ENCODE measurements at regions of chr3 and their contacts with region 1.

Region 1: GRCh38 chr3:72847751-72848702 is at the start of gene SHQ1:
- DNase-seq: peak; percentile 95
- ATAC-seq: peak; percentile 94
- H3K4me3 ChIP-seq: peak within 1 kb of the TSS; percentile 67 to 92 (median 85)
- H3K4me3 Mint-ChIP-seq: peak within 1 kb of the TSS; percentile 93
- H3K27ac ChIP-seq: peak within 1 kb of the TSS in 1 of 2 donors; percentile 50
- H3K27ac Mint-ChIP-seq: peak within 1 kb of the TSS; percentile 82
- H3K4me1 ChIP-seq: peaks cover 18 to 20% of the 10 kb centered on the region in 2 donors
- H3K4me1 Mint-ChIP-seq: peaks cover 35% of the 10 kb centered on the region
- H3K27me3 ChIP-seq: no peaks in the 10 kb centered on the region
- H3K27me3 Mint-ChIP-seq: no peaks in the 10 kb centered on the region
- CTCF ChIP-seq: no peak
- total RNA-seq, gene SHQ1: 30.6 and 32.0 TPM in 2 replicates

Region 2: DNA sequence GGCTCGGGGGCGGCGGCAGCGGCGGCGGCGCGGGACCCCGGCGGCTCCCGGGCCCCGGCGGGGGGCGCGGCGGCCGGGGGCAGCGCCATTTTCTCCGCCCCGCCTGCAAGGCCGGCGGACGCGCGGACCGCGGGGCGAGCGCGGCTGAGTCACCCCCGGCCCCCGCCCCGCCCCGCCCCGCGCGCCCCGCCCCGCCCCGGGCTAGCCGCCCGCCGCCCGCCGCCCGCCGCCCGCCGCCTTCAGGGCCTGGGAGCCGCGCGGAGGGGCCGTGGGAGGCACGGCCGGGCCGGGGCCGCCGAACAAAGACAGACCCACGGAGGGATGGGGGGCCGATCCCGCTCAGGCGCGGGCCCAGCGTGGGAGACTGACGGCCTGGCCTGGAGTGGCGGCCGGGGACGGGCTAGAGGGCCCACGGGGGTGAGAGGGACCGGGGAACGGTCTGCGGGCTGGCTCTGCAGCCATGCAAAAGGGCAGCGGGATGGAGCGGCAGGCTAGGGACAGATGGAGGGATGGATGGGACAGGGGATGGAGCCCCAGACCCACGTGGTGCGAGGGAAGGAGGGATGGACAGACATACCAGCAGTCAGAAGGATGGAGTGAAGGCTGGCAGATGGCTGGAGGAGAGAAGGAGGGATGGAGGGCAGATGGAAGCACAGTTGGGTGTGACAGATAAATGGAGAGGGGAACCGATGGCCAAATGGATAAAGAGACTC is 1122.6 kb before region 1 on chr3 and contains the start of gene EIF4E3:
- CTCF ChIA-PET with region 1: interaction called, 3 read pairs
- POLR2A ChIA-PET with region 1: no interaction called
- intact Hi-C with region 1: loop called (anchors 2 kb)
- DNase-seq: peak; percentile 51
- ATAC-seq: peak; percentile 73
- H3K4me3 ChIP-seq: peak within 1 kb of the TSS; percentile 59 to 71 (median 68)
- H3K4me3 Mint-ChIP-seq: peak within 1 kb of the TSS; percentile 82
- H3K27ac ChIP-seq: no peak within 1 kb of the TSS
- H3K27ac Mint-ChIP-seq: peak within 1 kb of the TSS; percentile 43
- H3K4me1 ChIP-seq: peaks cover 29% of the 10 kb centered on the region in 2 donors
- H3K4me1 Mint-ChIP-seq: peaks cover 43% of the 10 kb centered on the region
- H3K27me3 ChIP-seq: peaks cover 0 to 27% (median 0%) of the 10 kb centered on the region in 4 experiments
- H3K27me3 Mint-ChIP-seq: peaks cover 8% of the 10 kb centered on the region
- CTCF ChIP-seq: no peak
- total RNA-seq, gene EIF4E3: 4.2 and 5.0 TPM in 2 replicates

Region 3: DNA sequence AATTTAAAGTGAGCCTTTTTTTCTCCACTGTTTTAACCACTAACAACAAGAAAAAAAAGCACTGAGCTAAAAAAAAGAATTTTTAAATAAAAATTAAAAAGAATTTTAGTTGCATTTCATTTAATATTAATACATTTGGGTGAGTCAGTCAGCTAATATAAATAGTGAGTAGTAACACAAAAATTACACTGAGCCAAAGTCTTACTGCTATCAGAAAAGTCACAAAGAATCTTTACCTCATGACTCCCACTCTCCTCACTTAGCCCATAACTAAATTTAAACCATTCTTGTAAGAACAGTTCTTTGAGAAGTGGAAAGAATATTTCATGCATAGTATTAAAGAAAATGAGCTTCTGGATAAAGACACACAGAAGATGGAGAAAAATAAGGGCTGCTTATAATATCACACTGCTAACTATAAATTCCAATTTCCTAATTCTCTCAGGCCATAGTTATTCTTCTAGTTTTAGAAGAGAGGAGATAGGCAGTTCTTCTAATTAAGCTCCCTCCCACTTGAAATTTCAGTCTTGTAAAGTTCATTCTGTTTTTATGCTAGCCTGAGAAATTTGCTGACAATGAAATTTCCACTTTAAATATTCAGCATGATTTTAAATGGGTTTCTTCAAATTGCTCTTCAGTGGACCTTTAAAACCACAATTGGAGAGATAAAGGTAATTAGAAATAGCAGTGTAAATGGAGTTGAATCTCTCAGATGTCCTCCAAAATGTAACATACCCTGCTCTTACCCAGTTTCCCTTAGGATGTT is 17.4 kb before region 1 on chr3:
- CTCF ChIA-PET with region 1: no interaction called
- POLR2A ChIA-PET with region 1: no interaction called
- intact Hi-C with region 1: no loop called
- DNase-seq: no peak
- ATAC-seq: no peak
- H3K4me3 ChIP-seq: no peak overlapping the region
- H3K4me3 Mint-ChIP-seq: no peak overlapping the region
- H3K27ac ChIP-seq: no peak overlapping the region
- H3K27ac Mint-ChIP-seq: no peak overlapping the region
- H3K4me1 ChIP-seq: no peaks in the 10 kb centered on the region
- H3K4me1 Mint-ChIP-seq: no peaks in the 10 kb centered on the region
- H3K27me3 ChIP-seq: no peaks in the 10 kb centered on the region
- H3K27me3 Mint-ChIP-seq: no peaks in the 10 kb centered on the region
- CTCF ChIP-seq: no peak

Region 4: DNA sequence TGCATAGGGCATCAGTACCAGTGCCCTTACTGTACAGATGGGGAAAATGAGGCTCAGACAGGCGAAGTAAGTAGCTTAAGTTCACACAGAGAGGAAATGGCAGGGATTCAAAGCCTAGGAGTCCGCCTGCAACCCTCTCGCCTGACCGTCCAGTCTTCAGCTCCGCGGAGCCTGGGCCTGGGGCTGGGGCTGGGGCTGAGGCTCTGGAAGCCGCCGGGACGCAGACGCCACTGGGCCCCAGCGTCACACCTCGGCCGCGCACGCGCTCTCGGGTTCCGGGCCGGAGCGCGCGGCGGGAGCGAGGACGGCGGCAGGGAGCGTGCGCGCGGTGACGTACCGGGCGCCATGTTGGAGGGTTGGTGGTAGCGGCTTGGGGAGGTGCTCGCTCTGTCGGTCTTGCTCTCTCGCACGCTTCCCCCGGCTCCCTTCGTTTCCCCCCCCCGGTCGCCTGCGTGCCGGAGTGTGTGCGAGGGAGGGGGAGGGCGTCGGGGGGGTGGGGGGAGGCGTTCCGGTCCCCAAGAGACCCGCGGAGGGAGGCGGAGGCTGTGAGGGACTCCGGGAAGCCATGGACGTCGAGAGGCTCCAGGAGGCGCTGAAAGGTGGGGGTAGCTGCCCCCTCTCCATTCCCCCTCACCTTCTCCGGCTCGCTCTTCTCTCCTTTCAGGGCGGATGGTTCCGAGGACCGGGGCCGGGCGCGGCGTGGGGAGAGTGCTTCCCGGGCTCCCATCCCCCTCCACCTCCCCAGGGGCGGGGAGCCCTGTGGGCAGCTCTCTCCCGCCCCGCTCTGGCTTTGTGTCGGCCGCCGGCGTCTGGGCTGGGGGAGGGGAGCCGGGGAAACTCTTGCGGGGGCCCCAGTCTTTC is 148.7 kb after region 1 on chr3 and contains the start of gene PPP4R2:
- CTCF ChIA-PET with region 1: no interaction called
- POLR2A ChIA-PET with region 1: no interaction called
- intact Hi-C with region 1: loop called (anchors 1 kb)
- DNase-seq: peak; percentile 94
- ATAC-seq: peak; percentile 86
- H3K4me3 ChIP-seq: peak within 1 kb of the TSS; percentile 84 to 96 (median 91)
- H3K4me3 Mint-ChIP-seq: peak within 1 kb of the TSS; percentile 90
- H3K27ac ChIP-seq: peak within 1 kb of the TSS; percentile 92
- H3K27ac Mint-ChIP-seq: peak within 1 kb of the TSS; percentile 84
- H3K4me1 ChIP-seq: peaks cover 30 to 33% of the 10 kb centered on the region in 2 donors
- H3K4me1 Mint-ChIP-seq: peaks cover 36% of the 10 kb centered on the region
- H3K27me3 ChIP-seq: no peaks in the 10 kb centered on the region
- H3K27me3 Mint-ChIP-seq: no peaks in the 10 kb centered on the region
- CTCF ChIP-seq: no peak
- total RNA-seq, gene PPP4R2: 57.5 and 64.3 TPM in 2 replicates

Region 5: DNA sequence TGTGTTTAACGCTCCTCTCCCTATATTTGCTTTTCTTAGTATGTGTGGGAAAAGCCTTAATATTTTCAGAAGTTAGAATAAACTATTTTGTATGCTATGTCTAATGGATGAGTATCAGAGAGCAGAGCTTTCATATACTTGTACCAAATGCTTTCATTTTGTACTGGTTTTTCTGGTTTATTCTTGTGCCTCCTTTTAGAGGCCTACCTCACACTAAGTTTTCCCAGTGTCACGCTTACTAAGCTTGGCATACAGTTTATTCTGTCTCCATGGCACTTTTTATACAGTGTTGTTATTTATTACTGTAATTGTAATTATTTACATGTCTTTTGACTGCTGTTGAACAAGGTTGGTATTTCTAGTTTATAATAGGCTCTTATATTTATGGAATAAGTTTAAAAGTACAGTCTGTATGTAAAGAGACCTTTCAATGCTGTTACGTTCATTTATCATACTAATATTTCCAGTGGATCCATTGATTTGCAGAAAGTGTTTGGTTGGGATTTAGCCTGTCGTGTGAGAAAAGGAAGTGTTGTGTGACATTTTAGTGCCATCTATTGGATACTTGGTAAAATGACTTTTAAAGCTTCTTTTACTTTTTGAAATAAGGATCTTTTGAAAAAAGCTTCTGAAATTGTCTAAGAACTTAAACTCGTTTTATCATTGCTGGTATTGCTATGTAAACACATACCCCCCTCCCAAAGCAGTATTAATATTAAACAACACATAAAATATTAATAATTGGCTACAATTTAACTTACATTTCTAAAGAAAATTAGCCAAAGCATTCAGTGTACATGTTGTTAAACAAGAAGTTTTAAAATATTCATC is 208.2 kb after region 1 on chr3:
- CTCF ChIA-PET with region 1: interaction called, 26 read pairs
- POLR2A ChIA-PET with region 1: no interaction called
- intact Hi-C with region 1: loop called (anchors 5 kb)
- DNase-seq: peak; percentile 31
- ATAC-seq: no peak
- H3K4me3 ChIP-seq: no peak overlapping the region
- H3K4me3 Mint-ChIP-seq: no peak overlapping the region
- H3K27ac ChIP-seq: no peak overlapping the region
- H3K27ac Mint-ChIP-seq: no peak overlapping the region
- H3K4me1 ChIP-seq: no peaks in the 10 kb centered on the region
- H3K4me1 Mint-ChIP-seq: peaks cover 4% of the 10 kb centered on the region
- H3K27me3 ChIP-seq: no peaks in the 10 kb centered on the region
- H3K27me3 Mint-ChIP-seq: no peaks in the 10 kb centered on the region
- CTCF ChIP-seq: peak; percentile 83

Measured in B cell (primary cell).